ENCODE measurements at regions of chr15 and their contacts with region 1.

Region 1: GRCh38 chr15:32936283-32936918 is 218.6 kb downstream of the GREM1 start:
- DNase-seq: peak; percentile 62
- H3K4me3 ChIP-seq: no peak overlapping the region
- H3K27ac ChIP-seq: no peak overlapping the region
- H3K4me1 ChIP-seq: no peaks in the 10 kb centered on the region
- H3K27me3 ChIP-seq: peaks cover 2 to 8% of the 10 kb centered on the region in 2 experiments
- CTCF ChIP-seq: peak; percentile 54 to 66
- POLR2A ChIP-seq: no peak

Region 2: DNA sequence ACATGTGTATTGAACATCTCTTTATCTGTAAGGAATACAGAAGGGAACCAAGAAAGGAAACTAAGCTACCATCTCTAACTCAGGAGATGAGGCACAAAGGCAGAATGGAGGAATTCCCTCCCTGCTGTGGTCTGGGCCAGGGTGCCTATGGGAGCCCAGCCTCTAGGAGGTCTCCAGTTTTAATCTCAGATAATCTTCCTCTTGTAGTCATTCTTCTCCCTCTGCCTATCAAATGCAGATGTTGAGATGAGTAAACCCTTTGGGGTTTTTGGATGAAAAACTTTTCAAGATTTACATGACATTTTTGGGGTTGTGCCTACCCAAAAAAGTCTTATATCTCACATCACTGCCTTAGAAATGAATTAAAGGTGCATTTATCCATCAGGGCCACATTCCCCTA is 271.6 kb before region 1 on chr15:
- CTCF ChIA-PET with region 1: interaction called, 204 read pairs
- POLR2A ChIA-PET with region 1: no interaction called
- dilution Hi-C with region 1: no loop called
- intact Hi-C with region 1: loop called (anchors 1 kb)
- DNase-seq: no peak
- H3K4me3 ChIP-seq: no peak overlapping the region
- H3K27ac ChIP-seq: no peak overlapping the region
- H3K4me1 ChIP-seq: no peaks in the 10 kb centered on the region
- H3K27me3 ChIP-seq: no peaks in the 10 kb centered on the region
- CTCF ChIP-seq: no peak
- POLR2A ChIP-seq: no peak

Region 3: DNA sequence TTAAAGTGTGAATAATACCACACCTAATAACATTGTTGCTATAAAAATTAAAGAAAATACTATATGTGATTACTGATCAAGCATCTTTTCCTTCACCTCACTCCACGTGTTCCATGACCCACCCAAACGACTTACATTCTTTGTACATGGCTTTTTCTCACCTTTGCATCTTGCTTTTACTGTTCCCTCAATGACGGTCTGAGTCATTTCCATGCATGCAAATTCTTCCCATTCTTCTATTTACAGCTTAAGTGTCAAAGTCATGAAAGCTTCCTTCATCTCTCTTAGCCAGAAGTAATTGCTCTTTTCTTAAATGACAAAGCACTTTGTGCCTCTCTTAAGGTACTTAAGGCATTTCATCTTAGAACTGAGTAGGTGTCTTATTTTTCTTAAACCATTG is 154.6 kb before region 1 on chr15:
- CTCF ChIA-PET with region 1: interaction called, 12 read pairs
- POLR2A ChIA-PET with region 1: no interaction called
- dilution Hi-C with region 1: no loop called
- intact Hi-C with region 1: no loop called
- DNase-seq: peak; percentile 17
- H3K4me3 ChIP-seq: no peak overlapping the region
- H3K27ac ChIP-seq: no peak overlapping the region
- H3K4me1 ChIP-seq: peaks cover 14% of the 10 kb centered on the region
- H3K27me3 ChIP-seq: no peaks in the 10 kb centered on the region
- CTCF ChIP-seq: no peak
- POLR2A ChIP-seq: no peak

Region 4: GRCh38 chr15:32849769-32850668 is 86.4 kb before region 1 on chr15:
- CTCF ChIA-PET with region 1: interaction called, 293 read pairs
- POLR2A ChIA-PET with region 1: interaction called, 3 read pairs
- dilution Hi-C with region 1: no loop called
- intact Hi-C with region 1: no loop called
- DNase-seq: no peak
- H3K4me3 ChIP-seq: no peak overlapping the region
- H3K27ac ChIP-seq: no peak overlapping the region
- H3K4me1 ChIP-seq: peaks cover 15% of the 10 kb centered on the region
- H3K27me3 ChIP-seq: no peaks in the 10 kb centered on the region
- CTCF ChIP-seq: no peak
- POLR2A ChIP-seq: no peak

Region 5: DNA sequence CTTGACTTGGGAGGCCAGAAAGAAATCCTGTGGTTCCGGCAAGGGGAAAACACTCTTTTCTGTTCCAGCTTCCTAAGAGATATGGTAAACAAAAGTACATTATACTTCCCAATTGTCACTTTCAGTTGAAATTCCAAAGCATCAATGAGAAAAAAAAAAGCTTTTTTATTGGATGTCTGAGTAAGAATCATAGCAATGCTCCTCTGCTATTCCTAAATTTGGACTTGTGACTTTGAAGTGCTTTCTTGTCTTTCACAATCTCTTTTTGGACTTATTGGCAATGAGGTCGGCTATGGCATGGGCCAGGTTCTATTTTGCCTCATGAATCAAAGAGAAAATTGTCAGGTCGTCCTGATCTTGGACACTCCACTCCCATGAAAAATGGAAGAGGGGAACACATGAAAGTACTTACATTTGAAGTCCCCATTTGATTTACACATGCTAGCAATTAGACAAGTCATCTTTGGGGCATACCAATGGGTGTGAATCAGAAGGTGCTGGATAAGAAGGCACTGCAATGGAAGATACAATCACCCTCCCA is 48.1 kb before region 1 on chr15:
- CTCF ChIA-PET with region 1: interaction called, 12 read pairs
- POLR2A ChIA-PET with region 1: no interaction called
- dilution Hi-C with region 1: no loop called
- intact Hi-C with region 1: no loop called
- DNase-seq: no peak
- H3K4me3 ChIP-seq: no peak overlapping the region
- H3K27ac ChIP-seq: no peak overlapping the region
- H3K4me1 ChIP-seq: no peaks in the 10 kb centered on the region
- H3K27me3 ChIP-seq: no peaks in the 10 kb centered on the region
- CTCF ChIP-seq: no peak
- POLR2A ChIP-seq: no peak

Region 6: DNA sequence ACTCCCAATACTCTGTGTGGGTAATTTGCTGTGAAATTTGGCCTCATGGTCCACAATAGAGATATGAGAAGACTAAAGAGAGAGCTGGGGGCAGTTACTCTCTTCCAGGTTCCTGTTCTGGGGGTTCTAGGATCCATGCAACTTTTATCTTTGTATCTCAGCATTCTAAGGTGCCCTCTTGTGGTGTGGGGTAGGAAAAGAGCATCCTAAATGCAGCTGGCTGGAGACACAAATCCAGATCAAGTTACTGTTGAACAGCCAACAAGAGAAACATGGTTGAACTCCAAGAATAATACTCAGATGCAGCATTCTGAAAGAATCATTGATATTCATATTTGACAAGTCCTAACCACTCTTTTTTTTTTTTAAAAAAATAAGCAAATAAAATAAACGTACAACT is 19.6 kb after region 1 on chr15:
- CTCF ChIA-PET with region 1: interaction called, 26 read pairs
- POLR2A ChIA-PET with region 1: no interaction called
- dilution Hi-C with region 1: no loop called
- intact Hi-C with region 1: no loop called
- DNase-seq: peak; percentile 51
- H3K4me3 ChIP-seq: no peak overlapping the region
- H3K27ac ChIP-seq: no peak overlapping the region
- H3K4me1 ChIP-seq: no peaks in the 10 kb centered on the region
- H3K27me3 ChIP-seq: peaks cover 3 to 6% of the 10 kb centered on the region in 2 experiments
- CTCF ChIP-seq: peak; percentile 43 to 46
- POLR2A ChIP-seq: no peak